Body of pancreas (tissue), 4 donors: ENCODE measurements at regions of chr17 and their contacts with region 1.

Region 1: DNA sequence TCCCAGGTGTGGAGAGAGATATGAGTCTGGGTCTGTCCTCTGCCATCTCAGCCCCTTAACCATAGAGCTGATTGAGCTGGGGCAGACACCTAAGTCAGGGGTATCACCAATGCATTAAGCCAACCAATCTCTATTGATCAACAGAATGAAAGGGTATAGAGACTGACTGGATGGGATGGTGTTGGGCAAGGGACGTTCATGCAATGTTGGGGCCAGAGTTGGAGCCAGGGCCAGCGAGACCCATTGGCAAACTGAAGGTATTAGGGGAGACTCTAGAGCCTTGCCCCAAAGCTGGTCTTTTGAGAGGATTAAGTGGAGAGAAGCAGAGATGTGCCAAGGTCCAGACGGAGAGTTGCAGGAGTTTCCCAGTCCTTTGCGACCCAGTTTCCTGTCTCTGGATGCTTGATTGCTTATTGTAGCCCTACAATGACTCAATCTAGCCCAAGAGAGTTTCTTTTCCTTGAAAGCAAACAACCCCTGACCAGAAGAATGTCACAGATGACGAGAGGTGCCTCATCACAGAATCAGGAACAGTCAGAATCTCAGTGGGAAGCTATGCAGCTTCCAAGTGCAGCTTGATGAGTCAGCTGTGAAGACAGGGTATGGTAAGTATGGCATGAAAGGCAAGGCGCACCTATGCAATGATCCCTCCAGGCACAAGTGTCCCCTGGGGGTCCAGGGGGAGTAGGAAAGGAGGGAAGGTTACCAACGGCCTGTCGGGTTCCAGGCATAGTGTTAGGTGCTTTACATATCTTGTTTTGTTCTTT is 137.2 kb downstream of the UTP18 start:
- DNase-seq: no peak
- ATAC-seq: no peak
- H3K4me3 ChIP-seq: no peak overlapping the region
- H3K27ac ChIP-seq: no peak overlapping the region
- H3K4me1 ChIP-seq: no peaks in the 10 kb centered on the region
- H3K27me3 ChIP-seq: no peaks in the 10 kb centered on the region
- CTCF ChIP-seq: no peak
- POLR2A ChIP-seq: no peak

Region 2: GRCh38 chr17:51335883-51336822 is 61.4 kb before region 1 on chr17:
- intact Hi-C with region 1: loop called (anchors 10 kb)
- DNase-seq: no peak
- ATAC-seq: no peak
- H3K4me3 ChIP-seq: no peak overlapping the region
- H3K27ac ChIP-seq: no peak overlapping the region
- H3K4me1 ChIP-seq: no peaks in the 10 kb centered on the region
- H3K27me3 ChIP-seq: no peaks in the 10 kb centered on the region
- CTCF ChIP-seq: no peak
- POLR2A ChIP-seq: no peak

Region 3: GRCh38 chr17:51461578-51462004 is 64.0 kb after region 1 on chr17:
- intact Hi-C with region 1: no loop called
- DNase-seq: peak; percentile 62 to 65 (median 64)
- ATAC-seq: peak; percentile 55
- H3K4me3 ChIP-seq: no peak overlapping the region
- H3K27ac ChIP-seq: no peak overlapping the region
- H3K4me1 ChIP-seq: no peaks in the 10 kb centered on the region
- H3K27me3 ChIP-seq: no peaks in the 10 kb centered on the region
- CTCF ChIP-seq: peak; percentile 57 to 77 (median 65)
- POLR2A ChIP-seq: no peak

Region 4: GRCh38 chr17:51572115-51572514 is 174.6 kb after region 1 on chr17:
- intact Hi-C with region 1: no loop called
- DNase-seq: no peak
- ATAC-seq: no peak
- H3K4me3 ChIP-seq: no peak overlapping the region
- H3K27ac ChIP-seq: no peak overlapping the region
- H3K4me1 ChIP-seq: no peaks in the 10 kb centered on the region
- H3K27me3 ChIP-seq: no peaks in the 10 kb centered on the region
- CTCF ChIP-seq: no peak
- POLR2A ChIP-seq: no peak